ENCODE measurements at regions of chr19 and their contacts with region 1.

Region 1: GRCh38 chr19:50329146-50329925 is at the start of gene KCNC3:
- DNase-seq: peak; percentile 97 to 100 (median 100)
- H3K4me3 ChIP-seq: peak within 1 kb of the TSS; percentile 39 to 84 (median 58)
- H3K27ac ChIP-seq: peak within 1 kb of the TSS in 58 of 59 donors; percentile 38 to 93 (median 82)
- H3K27me3 ChIP-seq: no peaks in the 10 kb centered on the region
- CTCF ChIP-seq: peak in 17 of 56 donors; percentile 5 to 50 (median 20)
- total RNA-seq, gene KCNC3: 15.1 to 99.8 (median 56.4) TPM

Region 2: GRCh38 chr19:50147462-50148423 is 181.6 kb before region 1 on chr19:
- intact Hi-C with region 1: loop called in 1 of 2 experiments (anchors 10 kb)
- DNase-seq: peak; percentile 75 to 96 (median 90)
- H3K4me3 ChIP-seq: peak overlapping the region; percentile 56 to 100 (median 77)
- H3K27ac ChIP-seq: peak overlapping the region; percentile 23 to 96 (median 84)
- H3K27me3 ChIP-seq: no peaks in the 10 kb centered on the region
- CTCF ChIP-seq: peak in 54 of 56 donors; percentile 19 to 70 (median 50)

Region 3: GRCh38 chr19:50252111-50252886 is 77.0 kb before region 1 on chr19:
- intact Hi-C with region 1: loop called (anchors 2 to 5 kb)
- DNase-seq: peak in 3 of 10 donors; percentile 19 to 44 (median 22)
- H3K4me3 ChIP-seq: no peak overlapping the region
- H3K27ac ChIP-seq: no peak overlapping the region
- H3K27me3 ChIP-seq: no peaks in the 10 kb centered on the region
- CTCF ChIP-seq: peak in 55 of 56 donors; percentile 27 to 83 (median 73)

Region 4: DNA sequence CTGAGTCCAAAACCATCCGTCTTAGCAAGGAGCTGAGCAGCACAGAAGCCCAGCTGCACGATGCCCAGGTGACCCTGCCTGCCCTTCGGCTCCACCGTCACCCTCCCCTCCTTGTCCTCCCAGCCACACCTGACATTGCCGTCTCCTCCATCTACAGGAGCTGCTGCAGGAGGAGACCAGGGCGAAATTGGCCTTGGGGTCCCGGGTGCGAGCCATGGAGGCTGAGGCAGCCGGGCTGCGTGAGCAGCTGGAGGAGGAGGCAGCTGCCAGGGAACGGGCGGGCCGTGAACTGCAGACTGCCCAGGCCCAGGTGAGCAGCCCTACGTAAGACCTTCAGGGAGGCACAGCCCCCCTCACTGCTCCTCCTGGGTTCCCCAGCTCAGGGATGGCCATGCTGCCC is 49.3 kb before region 1 on chr19:
- intact Hi-C with region 1: no loop called
- DNase-seq: no peak
- H3K4me3 ChIP-seq: no peak overlapping the region
- H3K27ac ChIP-seq: no peak overlapping the region
- H3K27me3 ChIP-seq: no peaks in the 10 kb centered on the region
- CTCF ChIP-seq: no peak

Region 5: DNA sequence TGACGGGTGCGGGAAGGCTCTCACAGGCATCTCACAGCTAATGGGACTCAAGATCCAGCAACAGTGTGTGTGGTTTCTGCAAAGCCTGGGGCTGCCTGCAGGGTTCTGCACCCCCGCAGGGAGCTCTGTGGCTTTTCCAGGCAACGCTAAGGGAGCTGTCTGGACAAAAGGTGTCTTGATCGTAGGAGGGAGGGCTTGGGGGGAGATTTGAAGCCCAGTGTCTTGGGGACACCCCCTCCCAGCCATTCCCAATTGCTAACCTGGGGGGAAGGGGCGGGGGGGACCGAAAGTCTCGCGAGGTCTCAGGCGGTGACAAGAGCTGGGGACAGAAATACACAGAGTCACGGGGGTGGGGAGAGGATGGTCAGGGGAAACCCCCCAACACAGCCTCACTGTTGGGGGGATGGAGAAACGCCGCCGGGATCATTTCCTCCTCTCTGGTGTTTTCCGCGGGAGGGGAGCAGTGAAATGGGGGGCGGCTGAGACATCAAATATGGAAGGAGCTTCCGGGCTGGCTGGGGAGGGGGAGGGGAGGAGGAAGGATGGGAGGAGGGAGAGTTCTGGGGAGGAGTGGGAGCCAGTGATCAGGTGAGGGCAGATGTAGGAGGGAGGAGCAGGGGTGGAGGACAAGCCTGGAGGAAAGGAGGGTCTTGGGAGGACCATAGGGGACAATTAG is 13.4 kb before region 1 on chr19:
- intact Hi-C with region 1: no loop called
- DNase-seq: peak in 6 of 10 donors; percentile 45 to 63 (median 60)
- H3K4me3 ChIP-seq: peak overlapping the region in 38 of 59 donors; percentile 9 to 63 (median 40)
- H3K27ac ChIP-seq: peak overlapping the region in 34 of 59 donors; percentile 16 to 83 (median 60)
- H3K27me3 ChIP-seq: peaks cover 0 to 38% (median 11%) of the 10 kb centered on the region in 45 donors
- CTCF ChIP-seq: no peak

Region 6: DNA sequence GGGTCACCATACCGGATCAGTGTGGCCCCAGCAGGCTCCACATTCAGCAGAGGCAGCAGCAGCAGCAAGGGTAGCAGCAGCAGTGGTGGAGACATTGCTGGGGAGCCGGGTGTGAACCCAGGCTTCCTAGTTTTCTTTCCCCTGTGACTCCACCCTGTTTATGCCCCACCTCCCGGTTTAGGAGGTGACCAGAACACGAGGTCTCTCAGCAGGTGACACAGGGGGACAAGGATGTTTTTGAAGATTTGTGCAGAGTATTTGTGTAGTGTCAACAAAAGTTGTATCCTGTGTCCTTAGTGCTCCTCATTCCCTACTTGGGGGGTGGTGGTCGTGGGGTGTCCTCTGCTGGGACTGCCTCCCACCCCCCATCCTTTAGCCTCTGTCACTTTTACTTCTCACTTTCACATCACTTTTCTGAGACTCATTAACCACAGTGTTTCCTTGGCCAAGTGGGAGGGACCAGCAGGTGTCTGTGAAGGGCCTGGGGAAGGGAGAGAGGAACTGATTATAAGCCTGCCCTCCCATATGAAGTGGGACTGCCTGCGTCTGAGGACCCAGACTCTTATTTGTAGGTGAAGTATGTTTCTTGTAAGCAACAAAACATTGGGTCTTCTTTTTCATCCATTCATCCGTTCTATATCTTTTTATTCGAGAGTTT is 15.5 kb after region 1 on chr19:
- intact Hi-C with region 1: no loop called
- DNase-seq: no peak
- H3K4me3 ChIP-seq: peak overlapping the region in 14 of 59 donors; percentile 5 to 45 (median 27)
- H3K27ac ChIP-seq: no peak overlapping the region
- H3K27me3 ChIP-seq: no peaks in the 10 kb centered on the region
- CTCF ChIP-seq: no peak

Measured in dorsolateral prefrontal cortex (tissue), 120 donors.